OCI-LY7 (cell line): ENCODE measurements at regions of chr11 and their contacts with region 1.

Region 1: DNA sequence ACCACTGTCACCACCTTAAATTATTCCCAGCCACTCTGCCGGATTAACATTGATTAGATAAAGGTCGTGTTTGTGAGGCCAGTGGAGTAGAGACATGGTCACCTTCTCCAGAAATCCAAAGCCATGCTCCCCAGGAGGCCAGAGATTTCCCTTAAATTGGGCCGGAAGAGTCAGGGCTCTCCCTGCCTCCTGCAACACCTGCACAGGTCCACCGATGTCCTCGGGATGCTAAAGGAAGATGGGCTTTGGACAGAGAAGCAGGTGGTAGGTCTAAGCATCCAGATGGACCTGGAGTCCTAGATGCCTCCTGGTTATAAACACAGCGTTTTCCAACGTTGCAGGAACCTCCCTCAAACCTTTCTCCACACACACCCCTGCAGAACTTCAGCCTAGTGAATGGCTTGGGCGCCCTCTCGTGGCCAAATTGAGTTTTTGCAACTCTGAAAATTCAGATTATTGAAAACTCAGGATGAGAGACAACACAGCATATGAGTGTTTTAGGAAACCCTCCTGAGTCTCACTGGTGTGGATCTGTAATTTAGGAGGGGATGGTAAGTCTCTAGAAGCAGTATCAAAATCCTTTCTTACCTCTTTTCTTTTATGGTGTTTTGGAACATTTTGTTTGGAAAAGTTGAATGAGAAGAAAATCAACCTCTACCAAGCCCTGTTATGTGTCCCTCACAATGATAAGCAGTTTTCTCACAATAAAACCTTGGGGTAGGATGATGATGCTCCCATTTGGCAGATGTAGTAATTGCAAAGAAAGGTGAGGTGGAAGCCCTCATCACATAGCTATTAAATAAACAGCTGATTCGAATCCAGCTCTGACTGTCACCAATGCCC is 109.6 kb downstream of the RRAS2 start:
- DNase-seq: peak; percentile 74
- H3K4me3 ChIP-seq: no peak overlapping the region
- H3K27ac ChIP-seq: no peak overlapping the region
- H3K4me1 ChIP-seq: peaks cover 12% of the 10 kb centered on the region
- CTCF ChIP-seq: peak; percentile 98

Region 2: GRCh38 chr11:13772223-13773046 is 476.9 kb before region 1 on chr11:
- CTCF ChIA-PET with region 1: interaction called, 5 read pairs
- POLR2A ChIA-PET with region 1: interaction called, 5 read pairs
- intact Hi-C with region 1: loop called (anchors 1 kb)
- DNase-seq: peak; percentile 90
- H3K4me3 ChIP-seq: no peak overlapping the region
- H3K27ac ChIP-seq: peak overlapping the region; percentile 21
- H3K4me1 ChIP-seq: peaks cover 25% of the 10 kb centered on the region
- CTCF ChIP-seq: peak; percentile 98

Region 3: DNA sequence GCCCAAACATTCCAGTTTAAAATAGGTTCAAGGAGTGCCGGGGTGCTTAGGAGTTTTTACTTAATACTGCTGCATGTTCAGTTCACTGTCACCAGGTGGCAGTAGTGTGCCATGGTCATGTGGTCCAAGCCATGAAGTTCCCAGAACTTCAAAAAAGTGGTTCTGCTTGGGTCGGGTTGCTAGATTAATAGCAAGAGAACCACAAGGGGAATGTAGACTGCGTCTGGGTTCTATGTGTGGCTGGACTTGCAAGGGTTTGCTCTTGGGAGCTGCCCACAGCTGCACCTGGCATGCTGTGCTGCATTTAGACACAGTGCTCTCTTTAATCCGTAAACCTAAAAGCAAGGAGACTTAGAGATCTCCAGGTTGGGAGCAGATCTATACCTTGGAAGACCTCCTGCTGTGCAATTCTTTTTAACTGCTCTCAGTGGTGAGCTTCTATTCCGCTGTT is 293.3 kb before region 1 on chr11:
- CTCF ChIA-PET with region 1: no interaction called
- POLR2A ChIA-PET with region 1: no interaction called
- intact Hi-C with region 1: loop called (anchors 1 kb)
- DNase-seq: peak; percentile 80
- H3K4me3 ChIP-seq: no peak overlapping the region
- H3K27ac ChIP-seq: no peak overlapping the region
- H3K4me1 ChIP-seq: peaks cover 20% of the 10 kb centered on the region
- CTCF ChIP-seq: peak; percentile 98

Region 4: GRCh38 chr11:13963949-13964770 is 285.2 kb before region 1 on chr11:
- CTCF ChIA-PET with region 1: no interaction called
- POLR2A ChIA-PET with region 1: no interaction called
- intact Hi-C with region 1: loop called (anchors 2 kb)
- DNase-seq: no peak
- H3K4me3 ChIP-seq: no peak overlapping the region
- H3K27ac ChIP-seq: no peak overlapping the region
- H3K4me1 ChIP-seq: peaks cover 24% of the 10 kb centered on the region
- CTCF ChIP-seq: no peak

Region 5: DNA sequence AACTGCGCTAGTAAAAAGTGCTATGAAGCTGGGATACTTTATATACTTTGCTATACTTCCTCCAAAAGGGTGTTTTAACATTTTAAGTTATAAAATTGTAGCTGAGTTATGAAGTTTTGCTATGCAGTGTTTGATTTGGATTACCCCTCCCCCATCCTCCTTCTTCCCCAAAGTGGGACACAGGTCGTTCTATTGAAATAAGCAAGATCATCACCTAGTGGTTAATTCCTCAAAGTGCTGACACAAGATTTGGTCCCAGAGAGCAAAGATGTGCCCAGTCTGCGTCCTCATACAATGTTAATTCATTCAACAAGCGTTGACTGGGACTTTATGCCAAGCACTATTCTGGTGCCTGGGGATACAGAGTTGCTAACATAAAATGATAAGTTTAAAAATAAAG is 208.3 kb before region 1 on chr11:
- CTCF ChIA-PET with region 1: no interaction called
- POLR2A ChIA-PET with region 1: no interaction called
- intact Hi-C with region 1: loop called (anchors 2 kb)
- DNase-seq: peak; percentile 41
- H3K4me3 ChIP-seq: no peak overlapping the region
- H3K27ac ChIP-seq: no peak overlapping the region
- H3K4me1 ChIP-seq: no peaks in the 10 kb centered on the region
- CTCF ChIP-seq: peak; percentile 77

Region 6: DNA sequence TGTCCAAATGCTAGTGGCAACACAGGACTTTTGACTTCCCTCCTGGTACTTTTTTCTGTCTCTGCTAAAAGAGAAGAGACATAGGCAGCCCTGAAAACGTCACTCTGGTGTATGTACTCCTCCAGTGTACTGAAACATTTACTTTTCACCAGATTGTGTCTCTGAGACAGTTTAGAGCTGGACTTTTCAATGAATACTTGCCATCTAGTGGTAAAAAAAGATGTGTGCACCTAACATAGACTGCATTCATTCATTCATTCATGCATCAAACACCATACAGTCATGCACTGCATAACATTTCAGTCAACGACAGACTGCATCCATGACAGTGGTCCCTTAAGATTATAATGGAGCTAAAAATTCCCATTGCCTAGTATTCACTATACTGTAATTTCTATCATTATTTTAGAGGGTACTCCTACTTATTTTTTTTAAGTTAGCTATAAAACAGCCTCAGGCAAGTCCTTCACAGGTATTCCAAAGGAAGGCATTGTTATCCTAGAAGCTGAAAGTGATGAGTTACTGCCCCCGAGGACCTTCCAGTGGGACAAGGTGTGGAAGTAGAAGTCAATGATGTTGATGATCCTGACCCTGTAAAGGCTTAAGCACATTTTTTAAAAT is 100.6 kb before region 1 on chr11:
- CTCF ChIA-PET with region 1: no interaction called
- POLR2A ChIA-PET with region 1: no interaction called
- intact Hi-C with region 1: loop called (anchors 2 kb)
- DNase-seq: peak; percentile 76
- H3K4me3 ChIP-seq: no peak overlapping the region
- H3K27ac ChIP-seq: no peak overlapping the region
- H3K4me1 ChIP-seq: peaks cover 3% of the 10 kb centered on the region
- CTCF ChIP-seq: peak; percentile 87

Region 7: GRCh38 chr11:14499554-14500180 is 250.3 kb after region 1 on chr11 and contains the start of gene COPB1:
- CTCF ChIA-PET with region 1: no interaction called
- POLR2A ChIA-PET with region 1: no interaction called
- intact Hi-C with region 1: no loop called
- DNase-seq: peak; percentile 94
- H3K4me3 ChIP-seq: peak within 1 kb of the TSS; percentile 100
- H3K27ac ChIP-seq: peak within 1 kb of the TSS; percentile 74
- H3K4me1 ChIP-seq: peaks cover 19% of the 10 kb centered on the region
- CTCF ChIP-seq: no peak
- total RNA-seq, gene COPB1: 61.1 and 81.7 TPM in 2 replicates